ENCODE measurements at regions of chr3 and their contacts with region 1.

Region 1: DNA sequence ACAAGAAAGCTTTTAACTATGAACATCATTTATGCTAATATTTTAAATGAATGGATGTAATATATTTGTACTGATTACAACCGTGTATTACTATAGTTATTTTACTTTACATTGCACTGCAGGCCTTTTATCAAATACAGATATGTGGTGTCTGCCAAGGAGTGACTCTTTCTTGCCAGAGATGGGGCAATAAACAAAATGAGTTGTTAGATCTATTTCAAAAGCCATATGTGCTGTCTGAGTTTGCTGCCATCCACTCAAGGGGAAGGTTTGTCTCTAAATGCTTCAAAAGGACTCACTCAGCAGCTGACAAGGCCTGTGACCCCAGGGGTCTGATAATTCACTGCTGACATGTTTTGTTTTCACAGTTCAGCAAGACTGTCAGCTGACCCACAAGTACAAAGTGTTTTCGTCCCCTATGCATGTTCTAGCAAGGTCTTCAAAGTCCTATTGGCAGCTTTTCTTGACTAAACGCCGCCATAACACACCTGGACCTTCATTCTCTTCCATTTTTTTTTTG is 41.3 kb upstream of the ZBED2 start:
- DNase-seq: no peak
- H3K4me3 ChIP-seq: no peak overlapping the region
- H3K27ac ChIP-seq: no peak overlapping the region
- H3K4me1 ChIP-seq: no peaks in the 10 kb centered on the region
- H3K27me3 ChIP-seq: no peaks in the 10 kb centered on the region
- CTCF ChIP-seq: no peak

Region 2: DNA sequence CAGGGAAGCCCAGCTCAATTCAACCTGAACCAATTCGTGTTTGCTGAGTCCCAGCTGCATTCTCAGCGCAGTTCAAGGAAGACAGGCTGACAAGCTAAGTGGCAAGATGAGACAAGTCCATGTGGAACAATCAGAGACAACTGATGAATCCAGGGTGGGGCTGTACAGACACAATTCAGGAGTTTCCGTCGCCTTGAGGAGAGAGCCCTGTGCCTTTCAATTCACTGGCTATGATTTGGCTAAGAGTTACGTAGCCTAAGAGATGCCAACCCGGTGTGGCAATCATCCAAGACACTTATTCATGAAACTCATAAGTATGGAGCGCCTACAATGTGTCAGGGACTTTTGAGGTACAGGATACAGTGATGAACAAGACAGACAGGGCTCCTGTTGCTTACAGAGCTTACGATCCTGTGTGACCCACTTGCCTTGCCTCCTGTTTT is 25.8 kb before region 1 on chr3:
- CTCF ChIA-PET with region 1: no interaction called
- POLR2A ChIA-PET with region 1: no interaction called
- intact Hi-C with region 1: loop called (anchors 1 kb)
- DNase-seq: no peak
- H3K4me3 ChIP-seq: no peak overlapping the region
- H3K27ac ChIP-seq: no peak overlapping the region
- H3K4me1 ChIP-seq: no peaks in the 10 kb centered on the region
- H3K27me3 ChIP-seq: no peaks in the 10 kb centered on the region
- CTCF ChIP-seq: no peak